B cell (primary cell): ENCODE measurements at regions of chr2 and their contacts with region 1.

Region 1: GRCh38 chr2:161238560-161239325 is 69.5 kb upstream of the PSMD14 start:
- DNase-seq: peak; percentile 66
- ATAC-seq: peak; percentile 54
- H3K4me3 ChIP-seq: peak overlapping the region; percentile 43 to 75 (median 57)
- H3K4me3 Mint-ChIP-seq: peak overlapping the region; percentile 90
- H3K27ac ChIP-seq: no peak overlapping the region
- H3K27ac Mint-ChIP-seq: peak overlapping the region; percentile 60
- H3K4me1 ChIP-seq: peaks cover 17% of the 10 kb centered on the region in 2 donors
- H3K4me1 Mint-ChIP-seq: peaks cover 51% of the 10 kb centered on the region
- H3K27me3 ChIP-seq: peaks cover 0 to 6% (median 0%) of the 10 kb centered on the region in 4 experiments
- H3K27me3 Mint-ChIP-seq: no peaks in the 10 kb centered on the region
- CTCF ChIP-seq: no peak

Region 2: GRCh38 chr2:161223139-161223732 is 15.5 kb before region 1 on chr2:
- CTCF ChIA-PET with region 1: interaction called, 12 read pairs
- POLR2A ChIA-PET with region 1: no interaction called
- intact Hi-C with region 1: no loop called
- DNase-seq: peak; percentile 62
- ATAC-seq: peak; percentile 66
- H3K4me3 ChIP-seq: no peak overlapping the region
- H3K4me3 Mint-ChIP-seq: no peak overlapping the region
- H3K27ac ChIP-seq: no peak overlapping the region
- H3K27ac Mint-ChIP-seq: no peak overlapping the region
- H3K4me1 ChIP-seq: no peaks in the 10 kb centered on the region
- H3K4me1 Mint-ChIP-seq: no peaks in the 10 kb centered on the region
- H3K27me3 ChIP-seq: no peaks in the 10 kb centered on the region
- H3K27me3 Mint-ChIP-seq: no peaks in the 10 kb centered on the region
- CTCF ChIP-seq: peak; percentile 91

Region 3: DNA sequence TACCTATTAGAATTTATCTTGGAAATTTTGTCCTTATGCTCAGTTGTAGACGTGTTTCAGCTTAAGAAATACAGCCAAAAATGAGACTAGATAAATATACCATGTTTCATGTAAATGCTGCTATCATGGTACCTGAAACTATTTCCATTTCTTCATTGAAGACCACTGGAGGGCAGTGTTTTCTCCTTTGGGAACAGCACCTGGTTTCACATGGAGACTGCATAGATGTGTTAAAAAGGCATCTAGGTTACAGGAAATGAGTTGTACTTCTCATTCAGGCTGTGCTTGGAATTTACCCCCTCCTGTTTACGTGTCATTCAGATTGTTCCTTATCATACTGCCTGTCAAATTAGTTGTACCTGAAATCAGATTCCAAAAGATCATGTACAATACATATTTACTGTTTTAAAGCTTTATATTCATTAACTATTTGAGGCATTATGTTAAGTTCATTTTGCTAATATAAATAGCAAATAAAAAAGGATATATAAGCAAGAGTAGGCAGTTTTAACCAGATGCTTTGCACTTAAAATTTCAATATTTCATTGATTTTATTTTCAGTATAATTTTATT is 12.2 kb after region 1 on chr2:
- CTCF ChIA-PET with region 1: interaction called, 14 read pairs
- POLR2A ChIA-PET with region 1: no interaction called
- intact Hi-C with region 1: no loop called
- DNase-seq: peak; percentile 47
- ATAC-seq: peak; percentile 53
- H3K4me3 ChIP-seq: no peak overlapping the region
- H3K4me3 Mint-ChIP-seq: no peak overlapping the region
- H3K27ac ChIP-seq: no peak overlapping the region
- H3K27ac Mint-ChIP-seq: no peak overlapping the region
- H3K4me1 ChIP-seq: peaks cover 0 to 3% of the 10 kb centered on the region in 2 donors
- H3K4me1 Mint-ChIP-seq: peaks cover 29% of the 10 kb centered on the region
- H3K27me3 ChIP-seq: no peaks in the 10 kb centered on the region
- H3K27me3 Mint-ChIP-seq: peaks cover 10% of the 10 kb centered on the region
- CTCF ChIP-seq: peak; percentile 67

Region 4: GRCh38 chr2:161308178-161308955 is 69.6 kb after region 1 on chr2 and contains the start of gene PSMD14:
- CTCF ChIA-PET with region 1: no interaction called
- POLR2A ChIA-PET with region 1: no interaction called
- intact Hi-C with region 1: loop called (anchors 5 kb)
- DNase-seq: peak; percentile 92
- ATAC-seq: peak; percentile 90
- H3K4me3 ChIP-seq: peak within 1 kb of the TSS; percentile 58 to 89 (median 86)
- H3K4me3 Mint-ChIP-seq: peak within 1 kb of the TSS; percentile 95
- H3K27ac ChIP-seq: peak within 1 kb of the TSS; percentile 69 to 90
- H3K27ac Mint-ChIP-seq: peak within 1 kb of the TSS; percentile 95
- H3K4me1 ChIP-seq: peaks cover 18 to 20% of the 10 kb centered on the region in 2 donors
- H3K4me1 Mint-ChIP-seq: peaks cover 38% of the 10 kb centered on the region
- H3K27me3 ChIP-seq: peaks cover 0 to 3% (median 0%) of the 10 kb centered on the region in 4 experiments
- H3K27me3 Mint-ChIP-seq: no peaks in the 10 kb centered on the region
- CTCF ChIP-seq: no peak
- total RNA-seq, gene PSMD14: 24.9 and 27.0 TPM in 2 replicates